K562 (cell line): ENCODE measurements at regions of chr7 and their contacts with region 1.

Region 1: GRCh38 chr7:77940647-77941046 is 142.1 kb downstream of the PHTF2 start:
- DNase-seq: peak; percentile 20 to 63 (median 38)
- ATAC-seq: peak; percentile 37
- H3K4me3 ChIP-seq: no peak overlapping the region
- H3K27ac ChIP-seq: no peak overlapping the region
- H3K4me1 ChIP-seq: peaks cover 12 to 20% of the 10 kb centered on the region in 2 experiments
- H3K27me3 ChIP-seq: no peaks in the 10 kb centered on the region
- CTCF ChIP-seq: peak; percentile 49 to 90 (median 57); a peak in 5 of 6 replicates
- EP300 ChIP-seq: no peak; the same call in 1 of the 2 replicates
- POLR2A ChIP-seq: no peak
- RAD21 ChIP-seq: peak; percentile 91 to 95

Region 2: DNA sequence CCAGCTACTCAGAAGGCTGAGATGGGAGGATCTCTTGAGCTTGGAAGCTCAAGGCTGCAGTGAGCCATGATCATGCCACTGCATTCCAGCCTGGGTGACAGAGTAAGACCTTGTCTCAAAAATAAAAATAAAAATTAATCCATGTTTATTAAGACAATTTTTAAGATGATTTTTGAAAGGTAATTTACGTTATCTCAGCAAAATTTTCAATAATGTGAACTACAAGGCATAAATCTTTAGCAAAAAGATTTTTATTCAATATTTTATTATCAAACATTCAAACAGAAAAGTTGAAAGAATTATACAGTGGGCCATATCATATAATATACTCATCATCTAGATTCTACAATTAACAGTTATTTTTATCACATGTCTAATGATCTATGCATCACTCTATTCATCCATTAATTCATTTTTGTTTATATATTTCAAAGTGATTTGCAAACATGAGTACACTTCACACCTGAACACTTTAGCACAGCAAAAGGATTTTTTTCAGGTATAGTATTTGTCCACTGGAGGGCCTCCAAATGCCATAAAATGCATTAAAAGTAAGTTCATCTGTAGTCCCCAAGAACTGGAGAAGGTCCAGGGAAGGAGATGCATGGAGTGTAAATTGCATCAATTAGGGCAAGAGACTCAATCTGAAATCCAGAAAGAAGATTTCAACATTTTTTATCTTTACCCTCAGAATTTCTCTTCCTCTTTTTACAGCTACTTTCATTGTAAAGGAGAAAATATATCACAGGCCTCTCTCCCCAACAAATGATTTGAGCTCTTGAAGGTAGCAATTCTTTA is 283.0 kb before region 1 on chr7:
- CTCF ChIA-PET with region 1: interaction called, 11 read pairs
- POLR2A ChIA-PET with region 1: no interaction called
- in situ Hi-C with region 1: no loop called
- intact Hi-C with region 1: loop called (anchors 5 kb)
- DNase-seq: peak; percentile 40 to 68 (median 46)
- ATAC-seq: peak; percentile 94
- H3K4me3 ChIP-seq: no peak overlapping the region
- H3K27ac ChIP-seq: no peak overlapping the region
- H3K4me1 ChIP-seq: no peaks in the 10 kb centered on the region
- H3K27me3 ChIP-seq: no peaks in the 10 kb centered on the region
- CTCF ChIP-seq: peak; percentile 62 to 86 (median 66); a peak in 5 of 6 replicates
- EP300 ChIP-seq: no peak
- POLR2A ChIP-seq: no peak
- RAD21 ChIP-seq: peak; percentile 94 to 95

Region 3: DNA sequence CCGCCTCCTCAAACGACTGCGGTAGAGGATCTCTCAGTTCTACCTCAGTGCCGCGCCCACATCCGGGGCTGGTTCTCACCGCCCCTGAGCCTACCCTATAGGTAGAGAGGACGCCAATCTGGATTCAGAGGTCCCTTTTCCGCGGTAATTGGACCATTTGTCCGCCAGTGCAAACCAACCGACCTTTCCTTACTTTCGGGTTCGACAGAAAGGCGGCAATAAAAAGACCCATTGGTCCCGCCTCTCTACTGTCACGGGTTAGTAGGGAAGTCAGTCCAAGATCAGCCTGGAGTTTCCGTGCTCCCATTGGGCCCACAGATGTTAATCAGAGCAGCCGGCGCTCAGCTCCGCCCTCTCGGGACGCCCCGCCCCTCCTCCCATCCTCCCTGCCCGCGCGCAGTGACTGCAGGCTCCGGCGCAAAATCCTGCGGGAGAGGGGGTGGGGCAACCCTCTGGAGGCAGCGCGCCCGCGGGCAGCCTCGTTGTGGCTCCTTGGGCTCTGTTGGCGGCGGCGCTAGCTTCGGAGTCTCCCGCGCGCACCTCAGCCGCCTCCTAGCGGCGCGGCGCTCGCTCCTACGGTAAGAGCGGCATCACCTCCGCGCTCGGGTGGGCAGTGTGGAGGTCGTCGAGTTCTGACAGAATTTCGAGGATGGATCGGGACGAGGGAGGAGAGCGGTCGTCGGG is 142.1 kb before region 1 on chr7 and contains the starts of genes PHTF2 and TMEM60:
- CTCF ChIA-PET with region 1: no interaction called
- POLR2A ChIA-PET with region 1: no interaction called
- in situ Hi-C with region 1: no loop called
- intact Hi-C with region 1: loop called (anchors 2 kb)
- DNase-seq: peak; percentile 96 to 99 (median 97)
- ATAC-seq: peak; percentile 90
- H3K4me3 ChIP-seq: peak within 1 kb of the TSS; percentile 75
- H3K27ac ChIP-seq: peak within 1 kb of the TSS; percentile 86
- H3K4me1 ChIP-seq: peaks cover 16 to 24% of the 10 kb centered on the region in 2 experiments; a peak in 4 of 5 replicates
- H3K27me3 ChIP-seq: no peaks in the 10 kb centered on the region
- CTCF ChIP-seq: peak; percentile 55 to 69 (median 64)
- EP300 ChIP-seq: peak; percentile 47; the same call in 1 of the 2 replicates
- POLR2A ChIP-seq: peak; percentile 76
- RAD21 ChIP-seq: peak; percentile 47 to 60
- polyA plus RNA-seq, gene PHTF2: 17.9 to 18.2 TPM
- polyA plus RNA-seq, gene TMEM60: 136 to 140 TPM

Region 4: GRCh38 chr7:78039790-78040776 is 99.4 kb after region 1 on chr7:
- CTCF ChIA-PET with region 1: interaction called, 39 read pairs
- POLR2A ChIA-PET with region 1: no interaction called
- in situ Hi-C with region 1: no loop called
- intact Hi-C with region 1: loop called (anchors 1 kb)
- DNase-seq: peak; percentile 76 to 85 (median 81)
- ATAC-seq: peak; percentile 99
- H3K4me3 ChIP-seq: no peak overlapping the region
- H3K27ac ChIP-seq: no peak overlapping the region
- H3K4me1 ChIP-seq: peaks cover 0 to 6% of the 10 kb centered on the region in 2 experiments; a peak in 1 of 5 replicates
- H3K27me3 ChIP-seq: peaks cover 19 to 27% of the 10 kb centered on the region in 2 experiments
- CTCF ChIP-seq: peak; percentile 85 to 92 (median 88)
- EP300 ChIP-seq: no peak
- POLR2A ChIP-seq: no peak
- RAD21 ChIP-seq: peak; percentile 88 to 93

Region 5: DNA sequence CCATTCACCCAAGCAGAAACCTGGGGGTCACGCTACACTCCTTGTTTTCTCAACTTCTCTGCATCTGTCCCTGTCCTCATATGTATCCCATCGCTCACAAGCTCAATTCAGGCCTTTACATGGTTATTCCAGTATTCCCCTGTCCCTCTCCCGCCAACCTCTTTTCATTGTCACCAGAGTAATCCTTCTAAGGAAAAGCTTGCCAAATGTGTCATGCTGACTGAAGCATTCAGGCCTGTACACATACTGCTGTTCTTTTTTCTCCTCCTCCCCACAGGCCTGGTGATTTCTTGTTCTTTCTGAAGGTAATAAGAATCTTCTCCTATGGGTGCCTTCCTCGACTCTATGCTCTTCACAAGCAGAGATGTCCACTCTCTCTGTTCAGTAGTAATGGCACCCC is 140.2 kb after region 1 on chr7:
- CTCF ChIA-PET with region 1: no interaction called
- POLR2A ChIA-PET with region 1: no interaction called
- in situ Hi-C with region 1: no loop called
- intact Hi-C with region 1: loop called (anchors 2 kb)
- DNase-seq: no peak
- ATAC-seq: no peak
- H3K4me3 ChIP-seq: no peak overlapping the region
- H3K27ac ChIP-seq: no peak overlapping the region
- H3K4me1 ChIP-seq: no peaks in the 10 kb centered on the region
- H3K27me3 ChIP-seq: peaks cover 13 to 14% of the 10 kb centered on the region in 2 experiments
- CTCF ChIP-seq: no peak
- EP300 ChIP-seq: no peak
- POLR2A ChIP-seq: no peak
- RAD21 ChIP-seq: no peak

Region 6: GRCh38 chr7:78134256-78134655 is 193.6 kb after region 1 on chr7:
- CTCF ChIA-PET with region 1: no interaction called
- POLR2A ChIA-PET with region 1: no interaction called
- in situ Hi-C with region 1: no loop called
- intact Hi-C with region 1: loop called (anchors 2 kb)
- DNase-seq: peak; percentile 41 to 67 (median 56)
- ATAC-seq: peak; percentile 89
- H3K4me3 ChIP-seq: no peak overlapping the region
- H3K27ac ChIP-seq: no peak overlapping the region
- H3K4me1 ChIP-seq: no peaks in the 10 kb centered on the region
- H3K27me3 ChIP-seq: peaks cover 2 to 12% of the 10 kb centered on the region in 2 experiments; a peak in 3 of 5 replicates
- CTCF ChIP-seq: peak; percentile 56 to 69 (median 56)
- EP300 ChIP-seq: no peak
- POLR2A ChIP-seq: no peak
- RAD21 ChIP-seq: peak; percentile 65 to 78

Region 7: DNA sequence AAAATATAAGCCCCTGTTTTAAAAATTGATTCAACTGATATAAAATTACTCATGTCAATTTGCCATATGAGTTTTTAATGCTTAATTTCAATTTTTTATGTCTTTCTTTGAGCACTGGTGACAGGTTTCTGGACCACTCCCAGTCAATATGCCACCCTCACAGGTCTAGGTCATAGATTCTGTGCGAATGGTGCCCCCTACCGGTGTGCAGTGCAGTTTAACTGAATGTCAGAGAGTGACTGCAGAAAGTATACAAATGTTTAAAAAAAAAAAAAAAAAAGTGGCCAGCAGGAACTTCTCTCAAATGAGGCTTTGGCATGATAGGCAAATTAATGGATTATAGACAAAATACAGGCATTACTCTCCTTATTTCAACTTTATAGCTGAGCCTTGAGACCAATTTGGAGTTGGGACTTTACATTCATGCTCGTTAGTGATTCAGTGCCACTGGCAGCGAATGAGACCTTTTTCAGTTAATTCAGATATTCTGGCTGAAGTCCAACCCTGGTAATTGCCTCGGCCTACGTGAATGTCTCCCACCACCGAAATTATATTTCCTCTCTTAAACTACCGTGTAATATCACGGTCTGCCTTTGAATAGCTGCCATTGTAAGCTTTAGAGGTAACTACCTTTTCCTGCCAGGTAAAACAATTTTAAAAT is 285.5 kb after region 1 on chr7:
- CTCF ChIA-PET with region 1: interaction called, 3 read pairs
- POLR2A ChIA-PET with region 1: no interaction called
- in situ Hi-C with region 1: no loop called
- intact Hi-C with region 1: loop called (anchors 2 kb)
- DNase-seq: peak; percentile 48 to 68 (median 64)
- ATAC-seq: peak; percentile 91
- H3K4me3 ChIP-seq: no peak overlapping the region
- H3K27ac ChIP-seq: no peak overlapping the region
- H3K4me1 ChIP-seq: no peaks in the 10 kb centered on the region
- H3K27me3 ChIP-seq: no peaks in the 10 kb centered on the region
- CTCF ChIP-seq: peak; percentile 55 to 66 (median 55)
- EP300 ChIP-seq: no peak
- POLR2A ChIP-seq: no peak
- RAD21 ChIP-seq: peak; percentile 54 to 55; a peak in 3 of 4 replicates